A673 (cell line): ENCODE measurements at regions of chr2 and their contacts with region 1.

Region 1: GRCh38 chr2:43239981-43240761 is 13.8 kb upstream of the ZFP36L2 start:
- DNase-seq: no peak
- H3K4me3 ChIP-seq: no peak overlapping the region
- H3K27ac ChIP-seq: no peak overlapping the region
- H3K4me1 ChIP-seq: no peaks in the 10 kb centered on the region
- H3K27me3 ChIP-seq: no peaks in the 10 kb centered on the region
- CTCF ChIP-seq: no peak

Region 2: DNA sequence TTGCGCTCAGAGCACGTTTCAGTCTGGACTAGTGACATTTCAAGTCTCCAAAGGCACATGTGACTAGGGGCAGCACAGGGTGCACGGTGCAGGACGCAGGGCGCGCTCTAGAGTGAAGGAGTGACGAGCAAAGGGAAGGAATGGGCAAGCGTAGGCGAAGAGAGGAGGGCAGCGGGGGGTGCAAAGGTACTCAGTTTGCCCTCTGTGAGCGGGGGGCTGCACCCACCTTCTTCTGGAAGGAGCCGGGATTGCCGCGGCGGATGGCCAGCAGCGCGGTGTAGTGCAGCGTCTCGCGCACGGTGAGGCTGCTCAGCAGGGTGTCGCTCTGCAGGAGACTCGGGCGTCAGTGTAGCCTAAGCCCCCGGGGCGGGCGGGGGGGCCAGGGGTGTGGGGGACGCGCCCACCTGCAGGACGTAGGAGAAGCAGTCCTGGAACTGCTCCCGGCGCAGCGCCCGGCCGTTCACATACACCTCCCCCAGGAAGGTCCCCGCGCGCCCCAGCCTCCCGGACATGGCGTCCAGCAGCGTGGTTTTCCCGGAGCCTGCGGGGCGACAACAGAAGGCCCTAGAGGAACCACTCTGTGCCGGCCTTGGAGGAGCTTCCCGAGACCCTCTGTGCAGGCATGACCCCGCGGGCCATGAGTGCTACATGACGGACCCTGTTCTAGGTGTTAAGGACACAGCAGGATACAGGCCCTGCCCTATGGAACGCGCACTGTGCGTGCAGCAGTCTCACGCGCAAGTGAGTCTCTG is 591.5 kb after region 1 on chr2:
- CTCF ChIA-PET with region 1: no interaction called
- POLR2A ChIA-PET with region 1: interaction called, 19 read pairs
- intact Hi-C with region 1: no loop called
- DNase-seq: no peak
- H3K4me3 ChIP-seq: peak overlapping the region; percentile 15
- H3K27ac ChIP-seq: no peak overlapping the region
- H3K4me1 ChIP-seq: no peaks in the 10 kb centered on the region
- H3K27me3 ChIP-seq: peaks cover 22% of the 10 kb centered on the region
- CTCF ChIP-seq: no peak